ENCODE measurements at regions of chr2 and their contacts with region 1.

Region 1: GRCh38 chr2:64062829-64063228 is 43.6 kb upstream of the VPS54 start:
- DNase-seq: no peak
- ATAC-seq: no peak
- H3K4me3 ChIP-seq: no peak overlapping the region
- H3K4me3 Mint-ChIP-seq: no peak overlapping the region
- H3K27ac ChIP-seq: no peak overlapping the region
- H3K27ac Mint-ChIP-seq: peak overlapping the region in 8 of 9 donors; percentile 83 to 97 (median 92)
- H3K4me1 ChIP-seq: peaks cover 0 to 22% of the 10 kb centered on the region in 2 donors
- H3K4me1 Mint-ChIP-seq: peaks cover 15 to 46% (median 31%) of the 10 kb centered on the region in 7 donors
- H3K27me3 ChIP-seq: no peaks in the 10 kb centered on the region
- H3K27me3 Mint-ChIP-seq: no peaks in the 10 kb centered on the region

Region 2: DNA sequence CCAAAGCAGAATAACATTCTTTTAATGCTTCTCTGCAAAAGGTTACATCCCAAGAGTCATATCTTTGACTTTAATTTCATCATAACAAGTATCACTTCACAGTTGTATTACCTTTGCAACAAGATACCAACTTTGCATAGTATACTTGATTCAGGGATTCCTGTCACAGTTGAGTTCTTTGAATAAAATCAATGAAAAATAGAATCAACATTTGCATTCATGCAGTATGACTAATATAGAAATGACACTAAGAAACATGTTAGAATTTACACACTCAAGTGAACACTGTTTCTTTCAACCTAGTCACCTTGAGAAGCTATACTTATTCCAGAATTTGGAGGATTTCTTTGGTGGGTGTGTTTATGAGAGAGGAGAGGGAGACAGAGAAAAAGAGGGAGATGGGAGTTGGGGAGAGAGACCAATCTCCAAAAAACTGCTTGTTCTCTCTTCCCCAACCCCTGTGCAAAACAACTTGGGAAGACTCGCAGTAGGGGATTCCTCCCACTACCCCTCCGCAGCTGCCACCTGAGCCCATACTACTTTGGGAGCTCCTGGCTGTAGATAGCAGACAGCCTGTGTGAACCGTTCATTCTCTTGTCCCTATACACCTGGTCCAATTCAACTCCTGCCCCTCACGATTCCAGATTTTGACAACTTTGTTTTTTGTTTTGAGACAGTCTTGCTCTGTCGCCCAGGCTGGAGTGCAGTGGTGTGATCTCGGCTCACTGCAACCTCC is 23.7 kb after region 1 on chr2:
- CTCF ChIA-PET with region 1: no interaction called
- POLR2A ChIA-PET with region 1: no interaction called
- intact Hi-C with region 1: loop called in 1 of 2 experiments (anchors 2 kb)
- DNase-seq: no peak
- ATAC-seq: no peak
- H3K4me3 ChIP-seq: no peak overlapping the region
- H3K4me3 Mint-ChIP-seq: no peak overlapping the region
- H3K27ac ChIP-seq: no peak overlapping the region
- H3K27ac Mint-ChIP-seq: no peak overlapping the region
- H3K4me1 ChIP-seq: no peaks in the 10 kb centered on the region
- H3K4me1 Mint-ChIP-seq: peaks cover 0 to 11% (median 6%) of the 10 kb centered on the region in 7 donors
- H3K27me3 ChIP-seq: no peaks in the 10 kb centered on the region
- H3K27me3 Mint-ChIP-seq: peaks cover 0 to 8% (median 0%) of the 10 kb centered on the region in 5 donors

Region 3: GRCh38 chr2:64348386-64349130 is 285.7 kb after region 1 on chr2:
- CTCF ChIA-PET with region 1: no interaction called
- POLR2A ChIA-PET with region 1: no interaction called
- intact Hi-C with region 1: no loop called
- DNase-seq: no peak
- ATAC-seq: no peak
- H3K4me3 ChIP-seq: no peak overlapping the region
- H3K4me3 Mint-ChIP-seq: no peak overlapping the region
- H3K27ac ChIP-seq: no peak overlapping the region
- H3K27ac Mint-ChIP-seq: no peak overlapping the region
- H3K4me1 ChIP-seq: no peaks in the 10 kb centered on the region
- H3K4me1 Mint-ChIP-seq: no peaks in the 10 kb centered on the region
- H3K27me3 ChIP-seq: no peaks in the 10 kb centered on the region
- H3K27me3 Mint-ChIP-seq: peaks cover 0 to 18% (median 0%) of the 10 kb centered on the region in 5 donors